CD8-positive, alpha-beta T cell (primary cell): ENCODE measurements at regions of chr10 and their contacts with region 1.

Region 1: GRCh38 chr10:22666287-22667092 is 47.9 kb downstream of the PIP4K2A start:
- DNase-seq: peak; percentile 30 to 92 (median 67)
- ATAC-seq: peak; percentile 84
- H3K4me3 ChIP-seq: peak overlapping the region; percentile 29 to 42
- H3K4me3 Mint-ChIP-seq: peak overlapping the region; percentile 79
- H3K27ac ChIP-seq: peak overlapping the region; percentile 41 to 67
- H3K27ac Mint-ChIP-seq: peak overlapping the region; percentile 90
- H3K4me1 ChIP-seq: peaks cover 87% of the 10 kb centered on the region
- H3K4me1 Mint-ChIP-seq: peaks cover 83% of the 10 kb centered on the region
- H3K27me3 ChIP-seq: no peaks in the 10 kb centered on the region
- H3K27me3 Mint-ChIP-seq: no peaks in the 10 kb centered on the region
- CTCF ChIP-seq: no peak

Region 2: DNA sequence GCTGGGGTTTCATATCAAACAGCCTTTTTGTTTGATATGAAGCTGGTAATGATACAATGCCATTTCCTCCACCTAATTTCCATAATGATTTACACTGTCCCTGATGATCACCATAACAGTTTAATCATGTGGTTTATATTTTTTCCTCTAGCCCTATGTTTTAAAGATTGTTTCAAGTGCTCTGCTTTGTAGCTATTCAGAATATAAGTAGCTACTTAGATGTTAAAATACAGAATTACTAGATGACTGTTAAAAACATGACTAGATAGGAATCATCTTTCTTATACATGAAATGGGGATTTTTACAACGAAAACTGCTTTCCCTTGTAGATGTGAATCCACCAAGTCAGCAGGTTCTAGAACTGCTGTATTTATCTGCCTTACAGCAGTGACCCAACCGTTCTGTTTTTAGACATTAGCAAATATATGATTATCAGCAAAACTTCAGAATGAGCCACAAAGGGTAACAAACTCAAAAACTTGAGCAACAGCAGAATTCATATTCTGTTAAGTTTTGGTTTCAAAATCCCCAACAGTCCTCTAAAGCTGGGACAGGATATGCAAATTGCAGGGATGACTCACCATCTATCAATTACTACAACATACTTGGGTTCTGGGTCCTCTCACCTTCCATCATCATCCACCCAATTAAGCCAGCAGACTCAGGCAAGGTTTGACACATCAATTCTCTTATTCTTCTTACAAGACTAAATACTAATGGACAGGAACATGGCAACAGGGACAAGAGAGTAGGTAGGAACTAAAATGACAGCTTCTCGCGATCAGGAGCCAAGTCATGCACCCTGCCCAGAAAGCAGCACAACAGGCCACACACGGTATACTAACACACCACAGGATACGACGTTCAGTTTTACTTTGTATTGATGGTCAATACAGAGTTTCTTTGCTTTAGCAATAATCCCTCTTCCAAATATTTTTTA is 36.0 kb before region 1 on chr10:
- CTCF ChIA-PET with region 1: interaction called, 3 read pairs
- POLR2A ChIA-PET with region 1: interaction called, 3 read pairs
- intact Hi-C with region 1: loop called in 1 of 2 experiments (anchors 1 kb)
- DNase-seq: peak in 4 of 9 experiments; percentile 39 to 91 (median 68)
- ATAC-seq: peak; percentile 79
- H3K4me3 ChIP-seq: peak overlapping the region; percentile 16 to 21
- H3K4me3 Mint-ChIP-seq: peak overlapping the region; percentile 72
- H3K27ac ChIP-seq: peak overlapping the region; percentile 16 to 81
- H3K27ac Mint-ChIP-seq: peak overlapping the region; percentile 97
- H3K4me1 ChIP-seq: peaks cover 96% of the 10 kb centered on the region
- H3K4me1 Mint-ChIP-seq: peaks cover 96% of the 10 kb centered on the region
- H3K27me3 ChIP-seq: no peaks in the 10 kb centered on the region
- H3K27me3 Mint-ChIP-seq: no peaks in the 10 kb centered on the region
- CTCF ChIP-seq: no peak